ENCODE measurements at regions of chr3 and their contacts with region 1.

Region 1: GRCh38 chr3:139329345-139329850 is 14.4 kb upstream of the MRPS22 start:
- DNase-seq: peak; percentile 85
- ATAC-seq: peak; percentile 97
- H3K4me3 ChIP-seq: no peak overlapping the region
- H3K27ac ChIP-seq: no peak overlapping the region
- H3K4me1 ChIP-seq: peaks cover 4% of the 10 kb centered on the region; the same call in 1 of the 2 replicates
- H3K27me3 ChIP-seq: peaks cover 22% of the 10 kb centered on the region
- CTCF ChIP-seq: peak; percentile 97

Region 2: DNA sequence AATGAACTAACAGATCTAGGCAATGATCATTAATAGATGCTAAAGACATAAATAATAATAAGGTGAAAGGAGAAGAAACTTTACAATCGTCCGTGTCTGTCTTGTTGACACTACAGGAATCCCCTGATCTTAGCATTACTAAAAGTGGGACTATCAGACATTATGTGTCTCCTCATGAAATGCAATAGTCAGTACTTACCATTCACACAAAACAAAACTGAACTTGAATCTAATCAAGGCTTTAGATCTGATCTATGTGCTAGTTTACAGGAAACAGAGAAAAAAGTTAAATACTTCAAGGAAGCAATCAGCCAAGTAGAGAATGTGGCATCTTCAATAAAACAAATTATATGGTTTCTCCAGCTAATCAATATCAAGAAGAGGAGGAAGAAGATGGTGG is 568.4 kb before region 1 on chr3:
- CTCF ChIA-PET with region 1: no interaction called
- POLR2A ChIA-PET with region 1: no interaction called
- intact Hi-C with region 1: no loop called
- DNase-seq: no peak
- ATAC-seq: no peak
- H3K4me3 ChIP-seq: no peak overlapping the region
- H3K27ac ChIP-seq: no peak overlapping the region
- H3K4me1 ChIP-seq: peaks cover 14% of the 10 kb centered on the region
- H3K27me3 ChIP-seq: no peaks in the 10 kb centered on the region
- CTCF ChIP-seq: no peak

Region 3: GRCh38 chr3:139241783-139242182 is 87.6 kb before region 1 on chr3:
- CTCF ChIA-PET with region 1: no interaction called
- POLR2A ChIA-PET with region 1: no interaction called
- intact Hi-C with region 1: loop called (anchors 10 kb)
- DNase-seq: no peak
- ATAC-seq: no peak
- H3K4me3 ChIP-seq: no peak overlapping the region
- H3K27ac ChIP-seq: no peak overlapping the region
- H3K4me1 ChIP-seq: no peaks in the 10 kb centered on the region
- H3K27me3 ChIP-seq: peaks cover 59% of the 10 kb centered on the region
- CTCF ChIP-seq: no peak

Region 4: GRCh38 chr3:139288266-139288821 is 41.1 kb before region 1 on chr3:
- CTCF ChIA-PET with region 1: no interaction called
- POLR2A ChIA-PET with region 1: no interaction called
- intact Hi-C with region 1: loop called (anchors 2 kb)
- DNase-seq: no peak
- ATAC-seq: peak; percentile 71
- H3K4me3 ChIP-seq: no peak overlapping the region
- H3K27ac ChIP-seq: no peak overlapping the region
- H3K4me1 ChIP-seq: no peaks in the 10 kb centered on the region
- H3K27me3 ChIP-seq: no peaks in the 10 kb centered on the region
- CTCF ChIP-seq: no peak